Naive thymus-derived CD8-positive, alpha-beta T cell (primary cell): ENCODE measurements at regions of chr9 and their contacts with region 1.

Region 1: DNA sequence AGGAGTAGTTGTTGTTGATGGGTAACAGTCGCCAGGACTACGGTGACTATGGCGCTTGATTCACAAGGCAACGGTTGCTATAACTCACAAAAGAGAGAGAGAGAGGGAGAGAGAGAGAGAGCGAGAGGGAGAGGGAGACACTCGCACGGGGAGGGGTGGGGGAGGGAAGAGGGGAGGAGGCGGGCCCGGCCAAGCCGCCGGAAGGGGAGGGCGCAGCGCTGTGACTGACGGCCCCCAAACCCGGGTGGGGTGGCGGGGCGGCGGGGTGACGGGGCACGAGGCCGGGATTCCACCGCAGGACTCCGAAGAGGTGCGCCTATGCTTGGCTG is at the start of gene RFX3:
- DNase-seq: peak in 9 of 10 donors; percentile 90 to 96 (median 91)
- ATAC-seq: peak; percentile 53 to 61
- H3K4me3 Mint-ChIP-seq: peak within 1 kb of the TSS; percentile 86 to 99 (median 94)
- H3K27ac Mint-ChIP-seq: peak within 1 kb of the TSS; percentile 97 to 100 (median 99)
- H3K4me1 Mint-ChIP-seq: peaks cover 25 to 67% (median 61%) of the 10 kb centered on the region in 4 donors
- H3K27me3 Mint-ChIP-seq: peaks cover 0 to 5% (median 0%) of the 10 kb centered on the region in 5 donors
- polyA plus RNA-seq, gene RFX3: 4.1 to 4.5 (median 4.2) TPM

Region 2: GRCh38 chr9:2838371-2839000 is 687.3 kb before region 1 on chr9:
- POLR2A ChIA-PET with region 1: interaction called, 20 read pairs
- DNase-seq: no peak
- ATAC-seq: no peak
- H3K4me3 Mint-ChIP-seq: no peak overlapping the region
- H3K27ac Mint-ChIP-seq: peak overlapping the region in 5 of 10 donors; percentile 1 to 79 (median 27)
- H3K4me1 Mint-ChIP-seq: peaks cover 15 to 35% (median 31%) of the 10 kb centered on the region in 4 donors
- H3K27me3 Mint-ChIP-seq: no peaks in the 10 kb centered on the region

Region 3: DNA sequence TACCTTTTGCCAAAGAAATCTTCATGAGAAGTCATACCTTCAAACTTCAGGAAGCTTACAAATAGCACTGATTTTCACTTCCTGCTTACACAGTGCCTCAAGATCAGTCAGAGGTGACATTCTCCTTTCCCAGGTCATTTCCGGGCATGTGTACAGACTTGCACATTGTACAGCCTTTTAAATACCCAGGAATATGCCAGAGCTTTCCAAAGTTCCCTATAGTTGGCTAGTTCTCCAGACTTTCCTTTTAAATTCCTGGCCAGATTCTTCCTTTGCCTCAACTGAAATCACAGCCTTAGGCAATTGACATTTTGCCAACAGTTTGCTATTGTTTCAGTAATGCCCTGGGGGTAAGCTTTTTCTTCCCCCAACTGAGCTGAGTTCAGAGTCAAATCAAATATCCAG is 47.2 kb before region 1 on chr9:
- POLR2A ChIA-PET with region 1: interaction called, 16 read pairs
- DNase-seq: no peak
- ATAC-seq: peak; percentile 49 to 55
- H3K4me3 Mint-ChIP-seq: peak overlapping the region in 7 of 10 donors; percentile 25 to 91 (median 62)
- H3K27ac Mint-ChIP-seq: peak overlapping the region in 9 of 10 donors; percentile 39 to 94 (median 77)
- H3K4me1 Mint-ChIP-seq: peaks cover 15 to 72% (median 43%) of the 10 kb centered on the region in 4 donors
- H3K27me3 Mint-ChIP-seq: no peaks in the 10 kb centered on the region

Region 4: DNA sequence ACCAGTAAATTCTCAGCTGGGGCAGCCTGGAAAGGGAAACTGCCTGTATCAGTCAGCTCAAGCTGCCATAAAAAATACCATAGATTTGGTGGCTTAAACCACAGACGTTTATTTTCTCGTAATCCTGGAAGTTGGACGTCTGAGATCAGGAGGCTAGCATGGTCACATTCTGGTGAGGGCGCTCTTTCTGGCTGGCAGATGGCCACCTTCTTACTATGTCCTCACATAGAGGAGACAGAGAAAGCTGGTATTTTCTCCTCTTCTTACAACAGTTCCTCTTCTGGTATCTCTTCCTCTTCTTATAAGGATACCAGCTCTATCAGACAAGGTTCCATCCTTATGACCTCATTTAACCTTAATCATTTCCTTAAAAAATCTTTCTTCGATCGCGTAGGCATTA is 50.5 kb after region 1 on chr9:
- POLR2A ChIA-PET with region 1: no interaction called
- DNase-seq: no peak
- ATAC-seq: no peak
- H3K4me3 Mint-ChIP-seq: no peak overlapping the region
- H3K27ac Mint-ChIP-seq: no peak overlapping the region
- H3K4me1 Mint-ChIP-seq: peaks cover 0 to 7% (median 0%) of the 10 kb centered on the region in 4 donors
- H3K27me3 Mint-ChIP-seq: no peaks in the 10 kb centered on the region

Region 5: GRCh38 chr9:4297151-4297785 is 771.5 kb after region 1 on chr9:
- POLR2A ChIA-PET with region 1: interaction called, 15 read pairs
- DNase-seq: peak in 9 of 10 donors; percentile 10 to 64 (median 29)
- ATAC-seq: peak; percentile 35 to 39
- H3K4me3 Mint-ChIP-seq: peak overlapping the region; percentile 94 to 99 (median 96)
- H3K27ac Mint-ChIP-seq: peak overlapping the region; percentile 80 to 98 (median 92)
- H3K4me1 Mint-ChIP-seq: peaks cover 13 to 30% (median 19%) of the 10 kb centered on the region in 4 donors
- H3K27me3 Mint-ChIP-seq: peaks cover 0 to 36% (median 3%) of the 10 kb centered on the region in 5 donors

Region 6: GRCh38 chr9:4679268-4680172 is 1153.7 kb after region 1 on chr9 and contains the start of gene CDC37L1:
- POLR2A ChIA-PET with region 1: interaction called, 11 read pairs
- DNase-seq: peak; percentile 96 to 100 (median 99)
- ATAC-seq: peak; percentile 90 to 93
- H3K4me3 Mint-ChIP-seq: no peak within 1 kb of the TSS
- H3K27ac Mint-ChIP-seq: no peak within 1 kb of the TSS
- H3K4me1 Mint-ChIP-seq: peaks cover 12 to 13% (median 12%) of the 10 kb centered on the region in 4 donors
- H3K27me3 Mint-ChIP-seq: peaks cover 0 to 5% (median 0%) of the 10 kb centered on the region in 5 donors
- polyA plus RNA-seq, gene CDC37L1: 18.5 to 19.2 (median 19.1) TPM

Region 7: GRCh38 chr9:4792572-4793458 is 1267.0 kb after region 1 on chr9 and contains the start of gene RCL1:
- POLR2A ChIA-PET with region 1: interaction called, 13 read pairs
- DNase-seq: peak; percentile 93 to 98 (median 96)
- ATAC-seq: peak; percentile 92 to 93
- H3K4me3 Mint-ChIP-seq: peak within 1 kb of the TSS; percentile 94 to 98 (median 96)
- H3K27ac Mint-ChIP-seq: peak within 1 kb of the TSS; percentile 87 to 98 (median 96)
- H3K4me1 Mint-ChIP-seq: peaks cover 23 to 52% (median 43%) of the 10 kb centered on the region in 4 donors
- H3K27me3 Mint-ChIP-seq: peaks cover 0 to 1% (median 0%) of the 10 kb centered on the region in 5 donors
- polyA plus RNA-seq, gene RCL1: 18.7 to 22.2 (median 20.2) TPM